Sigmoid colon (tissue), 7 donors: ENCODE measurements at regions of chr15 and their contacts with region 1.

Region 1: DNA sequence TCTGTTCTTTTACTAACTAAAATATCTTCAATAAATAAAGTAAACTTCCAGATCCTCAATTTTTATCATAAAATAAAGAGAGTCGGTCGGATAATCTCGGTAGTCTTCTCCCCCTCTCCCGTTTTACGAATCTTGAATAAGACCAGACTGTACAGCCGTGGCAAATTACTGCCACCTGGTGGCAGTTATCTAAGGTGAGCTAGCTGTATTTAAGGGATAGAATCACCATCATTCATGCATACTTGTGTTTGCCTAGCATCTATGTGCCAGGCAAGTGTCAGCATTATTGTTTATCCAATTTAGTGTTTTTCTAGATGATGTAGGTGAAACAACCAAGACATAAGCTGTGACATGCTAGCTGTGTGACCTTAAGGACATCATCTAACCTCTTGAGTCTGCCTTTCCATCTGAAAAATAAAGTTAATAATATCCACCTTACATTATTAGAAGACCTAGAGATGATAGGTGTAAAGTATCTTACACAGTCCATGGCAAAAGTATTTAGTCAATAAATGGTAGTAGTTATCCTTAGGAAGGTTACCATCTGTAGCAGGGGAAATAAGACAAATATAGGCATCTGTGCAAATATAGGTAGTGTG is 21.3 kb downstream of the DUT start:
- DNase-seq: peak; percentile 69
- H3K4me3 ChIP-seq: peak overlapping the region in 1 of 4 donors; percentile 13
- H3K27ac ChIP-seq: no peak overlapping the region
- H3K4me1 ChIP-seq: peaks cover 0 to 2% (median 0%) of the 10 kb centered on the region in 4 donors
- H3K27me3 ChIP-seq: no peaks in the 10 kb centered on the region
- CTCF ChIP-seq: peak; percentile 29 to 80 (median 49)
- EP300 ChIP-seq: no peak
- POLR2A ChIP-seq: no peak

Region 2: DNA sequence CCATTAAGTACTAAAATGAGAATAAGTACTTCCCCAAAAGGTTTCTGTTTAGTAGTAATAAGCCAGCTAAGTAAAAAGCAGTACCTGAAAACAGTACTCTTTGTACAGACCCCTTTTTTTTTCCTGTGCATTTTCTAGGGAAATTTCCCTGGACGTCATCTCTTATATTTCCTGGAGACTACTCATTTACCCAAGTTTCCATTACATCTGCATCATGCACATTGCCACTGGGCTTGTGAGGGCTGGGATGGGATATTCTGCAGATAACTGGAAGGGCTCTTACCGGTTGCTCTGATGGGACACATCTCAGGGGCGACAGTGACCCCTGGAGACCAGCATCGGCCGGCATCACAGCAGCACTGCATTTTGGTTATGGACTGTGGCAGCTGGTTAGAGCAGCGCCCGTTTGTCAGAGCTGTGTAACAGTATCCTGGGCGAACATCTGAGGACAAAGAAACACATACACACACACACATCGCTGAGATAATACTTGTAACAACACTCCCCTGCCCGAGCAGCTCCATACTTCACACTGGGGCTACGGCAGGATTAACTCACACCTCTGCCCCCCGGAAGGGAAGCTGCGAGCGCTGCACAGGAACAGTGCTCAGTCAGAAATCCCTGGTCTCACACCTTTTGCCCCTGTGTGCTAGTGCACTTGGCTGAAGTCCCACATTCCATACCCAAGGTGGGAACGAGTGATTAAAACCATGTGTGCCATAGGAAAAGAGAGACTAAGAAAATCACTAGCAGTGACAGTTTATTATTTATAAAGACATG is 168.0 kb after region 1 on chr15:
- intact Hi-C with region 1: no loop called
- DNase-seq: no peak
- H3K4me3 ChIP-seq: no peak overlapping the region
- H3K27ac ChIP-seq: no peak overlapping the region
- H3K4me1 ChIP-seq: no peaks in the 10 kb centered on the region
- H3K27me3 ChIP-seq: no peaks in the 10 kb centered on the region
- CTCF ChIP-seq: no peak
- EP300 ChIP-seq: no peak
- POLR2A ChIP-seq: no peak

Region 3: GRCh38 chr15:48800811-48801455 is 448.4 kb after region 1 on chr15:
- intact Hi-C with region 1: loop called (anchors 10 kb)
- DNase-seq: no peak
- H3K4me3 ChIP-seq: no peak overlapping the region
- H3K27ac ChIP-seq: peak overlapping the region in 1 of 4 donors; percentile 5
- H3K4me1 ChIP-seq: no peaks in the 10 kb centered on the region
- H3K27me3 ChIP-seq: no peaks in the 10 kb centered on the region
- CTCF ChIP-seq: peak in 1 of 4 experiments; percentile 16
- EP300 ChIP-seq: no peak
- POLR2A ChIP-seq: no peak